Endothelial cell of umbilical vein (primary cell): ENCODE measurements at regions of chr2 and their contacts with region 1.

Region 1: DNA sequence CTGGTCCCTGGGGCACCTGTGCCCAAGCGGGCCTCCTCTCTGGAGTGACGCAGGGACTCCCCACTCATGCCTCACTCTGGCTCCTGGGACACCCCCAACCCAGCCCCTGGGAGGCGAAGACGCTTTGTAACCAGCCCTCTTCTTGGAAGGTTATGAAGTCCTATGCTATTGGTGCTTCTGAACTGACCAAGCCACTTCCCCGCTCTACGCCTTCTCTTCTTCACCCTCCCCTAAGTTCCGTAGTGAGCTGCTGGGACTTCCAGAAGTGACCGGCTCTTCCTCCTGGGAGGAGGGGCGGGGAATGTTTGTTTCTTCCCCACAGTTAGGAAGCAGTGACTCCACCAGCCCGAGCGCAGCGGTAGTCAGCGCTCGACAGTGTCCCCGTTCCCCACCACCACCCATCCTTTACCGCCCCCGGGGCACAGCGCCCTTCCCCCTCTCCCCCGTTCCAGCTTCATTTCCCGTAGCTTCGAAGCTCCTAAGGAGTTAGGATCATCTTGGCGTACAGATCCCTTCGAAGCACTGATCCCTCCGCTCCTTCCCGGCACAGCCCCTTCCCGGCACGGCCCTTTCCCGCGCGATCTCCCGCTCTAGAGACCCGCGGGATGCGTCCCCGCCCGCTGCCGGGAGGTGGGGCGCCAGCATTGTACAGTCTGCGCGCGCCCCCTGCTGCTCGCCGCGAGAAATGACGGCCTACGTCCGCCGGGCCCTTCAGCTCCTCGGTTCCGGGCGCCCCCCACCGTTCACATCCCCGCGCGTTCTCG is 25.3 kb upstream of the NOTO start:
- DNase-seq: peak; percentile 87
- H3K4me3 ChIP-seq: peak overlapping the region; percentile 13 to 42 (median 18)
- H3K27ac ChIP-seq: peak overlapping the region; percentile 11
- H3K4me1 ChIP-seq: peaks cover 32% of the 10 kb centered on the region
- H3K27me3 ChIP-seq: peaks cover 7 to 14% of the 10 kb centered on the region in 2 experiments
- CTCF ChIP-seq: peak; percentile 98 to 99
- POLR2A ChIP-seq: no peak

Region 2: GRCh38 chr2:72780477-72780876 is 396.6 kb before region 1 on chr2:
- CTCF ChIA-PET with region 1: no interaction called
- POLR2A ChIA-PET with region 1: no interaction called
- dilution Hi-C with region 1: no loop called
- intact Hi-C with region 1: loop called (anchors 5 kb)
- DNase-seq: peak; percentile 84
- H3K4me3 ChIP-seq: no peak overlapping the region
- H3K27ac ChIP-seq: peak overlapping the region; percentile 5
- H3K4me1 ChIP-seq: peaks cover 38% of the 10 kb centered on the region
- H3K27me3 ChIP-seq: no peaks in the 10 kb centered on the region
- CTCF ChIP-seq: no peak
- POLR2A ChIP-seq: no peak

Region 3: DNA sequence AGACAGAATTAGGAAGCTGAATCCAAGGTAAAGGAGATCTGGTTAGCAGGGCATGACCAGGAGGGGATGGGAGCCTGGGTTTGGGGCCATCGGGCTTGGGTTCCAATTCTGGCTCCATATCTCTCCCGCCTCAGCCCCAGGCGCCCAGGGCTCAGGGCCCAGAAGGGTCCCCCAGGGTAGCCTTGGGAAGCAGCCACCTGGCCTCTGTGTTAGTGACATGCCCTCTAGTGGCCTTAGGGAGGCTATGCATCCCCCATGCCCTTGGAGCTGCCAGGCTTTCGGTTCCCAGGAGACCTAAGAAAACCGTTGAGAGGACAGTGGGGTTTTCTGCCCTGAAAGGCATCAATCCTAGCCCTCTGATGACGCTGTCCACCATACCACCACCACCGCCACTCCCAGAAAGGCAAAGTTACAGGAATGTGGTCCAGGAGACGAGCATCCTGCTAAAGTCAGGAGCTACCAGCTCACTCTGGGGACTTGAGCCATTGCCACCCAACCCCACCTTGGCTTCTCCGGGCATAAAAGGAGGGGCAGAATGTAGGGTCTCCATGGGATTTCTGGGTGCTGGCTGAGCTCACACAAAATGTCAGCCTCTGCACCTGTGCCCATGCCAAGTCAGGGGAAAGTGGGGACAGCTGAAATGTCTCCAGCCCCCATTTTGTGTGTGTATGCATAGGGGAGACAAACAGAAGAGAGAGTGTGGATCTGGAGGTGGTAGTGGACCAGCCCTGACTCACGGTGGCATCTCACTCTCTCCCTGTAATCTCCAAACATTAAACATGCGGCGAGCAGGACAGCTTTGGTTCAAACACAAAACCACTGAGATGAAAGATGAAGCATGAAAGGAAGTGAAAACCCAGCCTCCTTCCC is 203.3 kb before region 1 on chr2:
- CTCF ChIA-PET with region 1: interaction called, 32 read pairs
- POLR2A ChIA-PET with region 1: no interaction called
- dilution Hi-C with region 1: no loop called
- intact Hi-C with region 1: no loop called
- DNase-seq: peak; percentile 46
- H3K4me3 ChIP-seq: no peak overlapping the region
- H3K27ac ChIP-seq: no peak overlapping the region
- H3K4me1 ChIP-seq: no peaks in the 10 kb centered on the region
- H3K27me3 ChIP-seq: no peaks in the 10 kb centered on the region
- CTCF ChIP-seq: peak; percentile 80 to 92
- POLR2A ChIP-seq: no peak

Region 4: GRCh38 chr2:73085691-73086360 is 91.2 kb before region 1 on chr2:
- CTCF ChIA-PET with region 1: interaction called, 58 read pairs
- POLR2A ChIA-PET with region 1: no interaction called
- dilution Hi-C with region 1: no loop called
- intact Hi-C with region 1: loop called (anchors 1 kb)
- DNase-seq: peak; percentile 76
- H3K4me3 ChIP-seq: no peak overlapping the region
- H3K27ac ChIP-seq: no peak overlapping the region
- H3K4me1 ChIP-seq: peaks cover 31% of the 10 kb centered on the region
- H3K27me3 ChIP-seq: no peaks in the 10 kb centered on the region
- CTCF ChIP-seq: peak; percentile 95 to 96
- POLR2A ChIP-seq: no peak

Region 5: DNA sequence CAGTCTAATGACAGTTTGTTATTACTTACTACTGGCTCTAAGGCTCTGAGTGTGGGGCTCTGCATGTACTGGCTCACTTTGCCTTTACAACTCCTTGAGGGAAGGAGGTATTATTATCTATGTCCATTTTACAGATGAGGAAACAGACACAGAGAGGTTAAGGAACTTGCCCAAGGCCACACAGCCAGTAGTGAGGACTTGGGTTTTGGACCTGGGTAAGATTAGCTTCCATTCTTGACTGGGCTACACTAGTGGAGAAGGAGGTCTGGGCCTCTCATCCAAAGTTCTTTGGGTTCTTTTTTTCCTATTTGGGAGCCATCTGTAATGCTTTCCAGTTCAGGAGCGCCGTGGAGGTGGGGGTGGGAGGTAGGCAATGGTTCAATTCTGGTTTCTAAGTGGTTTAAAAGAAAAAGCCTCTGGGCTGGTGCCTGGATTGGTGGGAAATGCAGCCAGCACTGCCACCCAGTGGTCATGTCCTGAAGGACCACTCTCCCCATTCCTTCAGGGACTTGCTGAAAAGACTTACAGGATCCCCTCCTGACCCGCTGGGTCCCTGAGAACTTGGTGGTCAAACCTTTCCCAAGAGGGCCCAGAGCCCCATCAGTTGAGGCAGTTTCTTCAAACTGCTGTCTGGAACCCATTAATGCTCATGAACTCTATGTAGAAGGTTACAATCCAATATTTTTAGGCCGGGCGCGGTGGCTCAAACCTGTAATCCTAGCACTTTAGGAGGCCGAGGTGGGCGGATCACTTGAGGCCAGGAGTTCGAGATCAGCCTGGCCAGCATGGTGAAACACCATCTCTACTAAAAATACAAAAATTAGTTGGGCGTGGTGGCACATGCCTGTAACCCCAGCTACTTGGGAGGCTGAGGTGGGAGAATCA is 13.3 kb before region 1 on chr2:
- CTCF ChIA-PET with region 1: interaction called, 23 read pairs
- POLR2A ChIA-PET with region 1: no interaction called
- dilution Hi-C with region 1: no loop called
- intact Hi-C with region 1: loop called (anchors 1 kb)
- DNase-seq: peak; percentile 84
- H3K4me3 ChIP-seq: no peak overlapping the region
- H3K27ac ChIP-seq: no peak overlapping the region
- H3K4me1 ChIP-seq: peaks cover 2% of the 10 kb centered on the region
- H3K27me3 ChIP-seq: no peaks in the 10 kb centered on the region
- CTCF ChIP-seq: peak; percentile 86 to 89
- POLR2A ChIP-seq: no peak

Region 6: GRCh38 chr2:73212448-73213176 is 35.5 kb after region 1 on chr2:
- CTCF ChIA-PET with region 1: interaction called, 78 read pairs
- POLR2A ChIA-PET with region 1: no interaction called
- dilution Hi-C with region 1: no loop called
- intact Hi-C with region 1: loop called (anchors 1 kb)
- DNase-seq: peak; percentile 77
- H3K4me3 ChIP-seq: no peak overlapping the region
- H3K27ac ChIP-seq: no peak overlapping the region
- H3K4me1 ChIP-seq: peaks cover 9% of the 10 kb centered on the region
- H3K27me3 ChIP-seq: peaks cover 0 to 5% of the 10 kb centered on the region in 2 experiments
- CTCF ChIP-seq: peak; percentile 96 to 99
- POLR2A ChIP-seq: no peak